ENCODE measurements at regions of chr19 and their contacts with region 1.

Region 1: DNA sequence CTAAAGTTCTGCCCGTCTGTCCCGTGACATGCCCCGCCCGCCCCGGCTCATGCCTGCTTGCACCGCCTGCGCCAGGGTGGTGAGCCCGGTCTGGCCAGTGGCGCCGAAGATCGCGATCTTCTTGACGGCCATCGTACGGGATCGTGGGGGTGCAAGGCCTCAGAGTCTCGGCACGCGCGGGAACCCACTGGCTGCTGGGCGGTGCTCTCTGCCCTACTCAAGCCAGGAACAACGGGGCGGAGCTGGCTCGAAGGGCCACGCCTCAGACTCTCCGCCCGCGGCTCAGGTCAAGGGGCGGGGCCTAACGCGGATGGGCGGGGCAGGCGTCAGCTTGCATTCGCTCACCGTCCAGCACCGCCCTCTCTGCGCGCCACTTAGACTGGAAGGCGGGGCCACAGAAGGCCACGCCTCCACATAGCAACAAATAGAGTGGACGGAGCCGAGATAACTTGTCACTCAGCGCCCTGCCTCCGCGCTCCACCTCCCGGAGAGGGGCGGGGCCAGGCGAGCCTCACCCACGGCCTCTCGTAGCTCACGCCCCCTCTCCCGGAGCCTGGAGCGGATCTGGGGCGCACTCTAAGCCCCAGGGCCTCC is at the start of gene BLVRB:
- DNase-seq: peak; percentile 99 to 100
- H3K4me3 ChIP-seq: peak within 1 kb of the TSS; percentile 47 to 86 (median 70)
- H3K27ac ChIP-seq: no peak within 1 kb of the TSS
- H3K4me1 ChIP-seq: peaks cover 0 to 15% (median 8%) of the 10 kb centered on the region in 4 experiments; a peak in 6 of 7 replicates
- H3K27me3 ChIP-seq: peaks cover 12 to 28% (median 22%) of the 10 kb centered on the region in 4 experiments
- CTCF ChIP-seq: no peak
- EP300 ChIP-seq: no peak
- POLR2A ChIP-seq: no peak
- RAD21 ChIP-seq: no peak
- total RNA-seq, gene BLVRB: 28.7 and 32.3 TPM in 2 replicates

Region 2: DNA sequence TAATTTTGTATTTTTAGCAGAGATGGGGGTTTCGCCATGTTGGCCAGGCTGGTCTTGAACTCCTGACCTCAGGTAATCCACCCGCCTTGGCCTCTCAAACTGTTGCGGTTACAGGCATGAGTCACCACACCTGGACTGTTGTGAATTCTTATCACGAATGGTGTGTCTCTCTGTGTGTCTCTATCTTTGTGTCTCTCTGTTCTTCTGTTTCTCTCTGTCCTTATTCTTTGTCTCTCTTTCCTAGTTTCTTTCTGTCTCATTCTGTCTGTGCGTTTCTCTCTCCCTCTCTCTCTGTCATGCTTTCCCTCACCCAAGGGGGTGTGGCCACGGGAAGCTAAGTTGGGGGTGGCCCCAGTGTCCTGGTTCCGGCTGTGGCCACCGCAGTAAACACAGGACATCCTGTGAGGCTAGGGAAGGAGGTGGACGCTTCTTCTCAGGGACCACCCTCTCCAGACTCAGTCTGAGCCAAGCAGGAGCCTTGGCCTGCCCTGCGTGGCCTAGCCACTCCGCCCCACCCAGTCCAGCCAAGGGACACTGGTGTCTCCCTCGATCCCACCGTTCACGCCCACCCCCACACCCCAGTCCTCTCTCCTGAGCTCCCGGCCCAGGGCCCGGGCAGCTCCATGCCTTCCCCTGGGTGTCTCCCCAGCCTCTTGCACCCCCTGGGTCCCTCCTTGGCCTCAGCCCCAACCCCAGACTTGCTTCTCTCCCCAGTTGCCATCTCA is 48.6 kb before region 1 on chr19:
- CTCF ChIA-PET with region 1: interaction called, 39 read pairs
- POLR2A ChIA-PET with region 1: interaction called, 10 read pairs
- DNase-seq: no peak
- H3K4me3 ChIP-seq: no peak overlapping the region
- H3K27ac ChIP-seq: no peak overlapping the region
- H3K4me1 ChIP-seq: peaks cover 4 to 18% (median 9%) of the 10 kb centered on the region in 4 experiments
- H3K27me3 ChIP-seq: no peaks in the 10 kb centered on the region; a peak in 1 of 7 replicates
- CTCF ChIP-seq: no peak
- EP300 ChIP-seq: no peak
- POLR2A ChIP-seq: no peak
- RAD21 ChIP-seq: no peak

Region 3: DNA sequence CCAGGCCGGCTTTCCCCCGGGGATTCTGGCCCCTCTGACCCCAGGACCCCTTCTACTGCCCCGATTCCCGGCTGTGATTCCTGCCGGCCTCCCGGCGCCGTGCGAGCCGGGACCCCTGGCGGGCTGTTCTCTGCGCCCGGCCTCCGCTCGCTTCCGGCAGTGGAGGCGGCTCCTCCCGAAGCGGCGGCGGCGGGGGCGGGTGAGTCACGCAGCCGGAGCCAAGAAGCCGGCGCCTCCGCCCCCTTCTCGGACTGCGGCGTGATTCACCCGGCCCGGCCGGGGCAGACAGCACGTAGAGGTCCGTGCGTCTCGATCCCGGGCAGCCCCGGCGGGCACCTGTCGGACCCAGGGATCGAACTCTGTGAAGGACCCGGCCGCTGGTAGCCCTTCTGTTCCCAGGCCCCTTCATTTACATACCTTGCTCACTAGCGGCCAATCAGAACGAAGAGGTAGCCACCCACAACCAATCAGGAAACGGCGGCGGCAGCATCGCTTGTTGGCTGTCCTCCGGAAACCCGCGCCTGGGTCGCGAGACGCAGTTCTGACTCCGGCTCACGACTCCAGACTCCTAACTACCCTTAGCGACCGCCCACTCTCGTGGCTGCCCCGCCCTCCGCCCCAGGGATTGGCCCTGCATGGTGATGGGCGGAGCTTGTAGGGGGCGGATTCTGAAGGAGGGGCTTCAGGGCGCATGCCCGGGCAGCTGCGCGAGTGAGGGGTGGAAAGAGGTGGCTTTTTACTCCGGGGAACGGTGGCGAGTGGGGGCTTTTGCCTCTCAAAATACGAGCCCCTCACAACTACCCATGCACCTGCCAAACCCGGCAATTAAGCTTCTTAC is 40.0 kb before region 1 on chr19 and contains the start of gene SERTAD1:
- CTCF ChIA-PET with region 1: interaction called, 39 read pairs
- POLR2A ChIA-PET with region 1: interaction called, 10 read pairs
- DNase-seq: peak; percentile 99
- H3K4me3 ChIP-seq: peak within 1 kb of the TSS; percentile 58 to 79 (median 71)
- H3K27ac ChIP-seq: peak within 1 kb of the TSS; percentile 69; the same call in 1 of the 2 replicates
- H3K4me1 ChIP-seq: peaks cover 0 to 6% (median 4%) of the 10 kb centered on the region in 4 experiments; a peak in 3 of 7 replicates
- H3K27me3 ChIP-seq: no peaks in the 10 kb centered on the region
- CTCF ChIP-seq: peak in 2 of 3 experiments; percentile 53 to 71; a peak in 2 of 4 replicates
- EP300 ChIP-seq: no peak
- POLR2A ChIP-seq: peak; percentile 92 to 96
- RAD21 ChIP-seq: no peak
- total RNA-seq, gene SERTAD1: 4.9 and 5.4 TPM in 2 replicates

Region 4: DNA sequence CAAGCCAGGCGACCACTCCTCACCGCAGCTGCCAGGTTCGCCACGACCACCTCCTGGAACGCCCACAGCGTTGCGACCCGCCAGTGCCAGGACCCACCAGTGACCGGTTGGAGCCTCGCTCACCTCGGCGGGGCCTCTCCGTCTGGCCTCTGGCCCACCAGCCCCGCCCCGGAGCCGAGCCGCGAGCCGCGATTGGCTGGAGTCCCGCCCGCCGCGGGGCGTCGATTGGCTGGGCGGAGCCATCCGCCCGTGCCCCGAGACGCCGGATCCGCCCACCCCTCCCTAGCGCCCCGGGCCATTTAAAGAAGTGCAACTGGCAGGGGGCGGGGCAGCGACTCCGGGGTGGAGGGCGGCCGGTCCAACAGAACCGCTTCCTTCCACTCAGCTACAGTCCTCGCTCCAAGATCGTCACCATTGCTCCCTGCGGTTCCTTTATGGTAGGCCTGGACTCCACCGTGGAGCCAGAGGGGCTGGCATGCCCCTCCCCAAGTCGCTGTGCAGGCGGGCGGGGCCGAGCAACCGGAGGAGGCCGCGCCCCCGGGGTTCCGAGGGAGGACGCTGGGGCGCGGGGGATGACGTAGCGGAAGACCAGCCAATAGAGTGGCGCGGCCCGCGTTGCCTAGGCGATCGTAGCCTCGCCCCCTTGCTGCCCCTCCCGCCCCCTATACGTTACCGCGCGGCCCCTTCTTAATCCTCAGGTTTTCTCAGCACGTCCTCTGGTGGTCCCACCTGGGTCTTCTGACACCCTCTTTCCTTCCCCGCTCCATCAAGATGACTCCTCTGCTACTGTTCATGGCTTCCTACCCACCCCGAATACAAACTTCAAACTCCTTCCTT is 21.2 kb before region 1 on chr19 and contains the start of gene SERTAD3:
- CTCF ChIA-PET with region 1: interaction called, 49 read pairs
- POLR2A ChIA-PET with region 1: interaction called, 25 read pairs
- DNase-seq: peak; percentile 85 to 97
- H3K4me3 ChIP-seq: peak within 1 kb of the TSS; percentile 97 to 99 (median 98)
- H3K27ac ChIP-seq: peak within 1 kb of the TSS; percentile 89
- H3K4me1 ChIP-seq: peaks cover 3 to 9% (median 7%) of the 10 kb centered on the region in 4 experiments; a peak in 6 of 7 replicates
- H3K27me3 ChIP-seq: no peaks in the 10 kb centered on the region
- CTCF ChIP-seq: peak; percentile 12 to 35 (median 17); a peak in 3 of 4 replicates
- EP300 ChIP-seq: no peak
- POLR2A ChIP-seq: peak; percentile 33 to 54
- RAD21 ChIP-seq: peak; percentile 46 to 52
- total RNA-seq, gene SERTAD3: 32.1 and 33.4 TPM in 2 replicates

Region 5: GRCh38 chr19:40452016-40452415 is 13.6 kb before region 1 on chr19:
- CTCF ChIA-PET with region 1: interaction called, 49 read pairs
- POLR2A ChIA-PET with region 1: interaction called, 9 read pairs
- DNase-seq: no peak
- H3K4me3 ChIP-seq: no peak overlapping the region
- H3K27ac ChIP-seq: no peak overlapping the region
- H3K4me1 ChIP-seq: no peaks in the 10 kb centered on the region
- H3K27me3 ChIP-seq: no peaks in the 10 kb centered on the region
- CTCF ChIP-seq: no peak
- EP300 ChIP-seq: no peak
- POLR2A ChIP-seq: no peak
- RAD21 ChIP-seq: no peak

Region 6: DNA sequence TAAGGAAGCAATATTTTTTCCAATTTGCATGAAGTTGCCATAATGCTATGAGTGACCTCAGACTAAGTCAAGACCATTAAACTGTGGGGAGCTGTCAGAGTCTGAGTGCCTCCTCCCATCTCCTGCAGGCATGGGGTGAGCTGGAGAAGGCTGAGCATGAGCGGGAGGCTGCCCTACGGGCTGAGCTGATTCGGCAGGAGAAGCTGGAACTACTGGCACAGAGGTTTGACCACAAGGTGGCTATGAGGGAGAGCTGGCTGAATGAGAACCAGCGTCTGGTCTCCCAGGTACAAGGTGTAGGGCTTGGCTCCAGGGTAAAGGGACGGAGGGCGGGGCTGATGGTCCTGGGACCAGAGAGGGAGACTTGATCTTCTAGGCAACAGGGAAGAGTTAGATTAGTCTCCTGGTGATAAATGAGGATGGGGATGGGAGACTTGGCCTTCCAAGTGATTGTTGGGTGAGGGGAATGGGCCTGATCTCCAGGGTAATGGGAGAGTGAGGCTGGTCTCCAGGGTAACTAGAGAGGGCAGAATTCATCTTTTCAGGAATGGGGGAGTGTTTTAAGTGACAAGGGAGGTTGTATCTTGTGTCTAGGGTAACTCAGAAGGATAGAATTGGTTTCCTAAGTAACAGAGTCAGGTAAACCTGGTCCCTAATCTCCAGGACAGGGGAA is 37.1 kb after region 1 on chr19:
- CTCF ChIA-PET with region 1: interaction called, 18 read pairs
- POLR2A ChIA-PET with region 1: no interaction called
- DNase-seq: peak in 1 of 2 experiments; percentile 17
- H3K4me3 ChIP-seq: no peak overlapping the region
- H3K27ac ChIP-seq: no peak overlapping the region
- H3K4me1 ChIP-seq: no peaks in the 10 kb centered on the region
- H3K27me3 ChIP-seq: peaks cover 0 to 6% (median 3%) of the 10 kb centered on the region in 4 experiments; a peak in 3 of 7 replicates
- CTCF ChIP-seq: peak; percentile 40 to 58 (median 40)
- EP300 ChIP-seq: no peak
- POLR2A ChIP-seq: no peak
- RAD21 ChIP-seq: peak; percentile 7 to 41; a peak in 3 of 4 replicates

Region 7: GRCh38 chr19:40512473-40513344 is 47.1 kb after region 1 on chr19:
- CTCF ChIA-PET with region 1: interaction called, 11 read pairs
- POLR2A ChIA-PET with region 1: no interaction called
- DNase-seq: peak in 1 of 2 experiments; percentile 77
- H3K4me3 ChIP-seq: peak overlapping the region; percentile 3 to 54 (median 20); a peak in 3 of 8 replicates
- H3K27ac ChIP-seq: no peak overlapping the region
- H3K4me1 ChIP-seq: peaks cover 0 to 4% (median 2%) of the 10 kb centered on the region in 4 experiments; a peak in 2 of 7 replicates
- H3K27me3 ChIP-seq: peaks cover 30 to 52% (median 44%) of the 10 kb centered on the region in 4 experiments
- CTCF ChIP-seq: 0 out of 4 replicates have a peak, but pooled peaks of 1 of the 3 experiments have one; percentile 22
- EP300 ChIP-seq: peak in 1 of 2 experiments; percentile 21; a peak in 1 of 3 replicates
- POLR2A ChIP-seq: no peak
- RAD21 ChIP-seq: no peak